ENCODE measurements at regions of chr20 and their contacts with region 1.

Region 1: GRCh38 chr20:32966881-32967781 is 37.1 kb downstream of the SUN5 start:
- DNase-seq: peak; percentile 26
- H3K4me3 ChIP-seq: no peak overlapping the region
- H3K27ac ChIP-seq: no peak overlapping the region
- H3K4me1 ChIP-seq: no peaks in the 10 kb centered on the region
- H3K27me3 ChIP-seq: no peaks in the 10 kb centered on the region
- CTCF ChIP-seq: no peak
- EP300 ChIP-seq: no peak
- POLR2A ChIP-seq: no peak

Region 2: GRCh38 chr20:33005132-33005566 is 38.0 kb after region 1 on chr20:
- intact Hi-C with region 1: no loop called
- DNase-seq: no peak
- H3K4me3 ChIP-seq: no peak overlapping the region
- H3K27ac ChIP-seq: no peak overlapping the region
- H3K4me1 ChIP-seq: no peaks in the 10 kb centered on the region
- H3K27me3 ChIP-seq: no peaks in the 10 kb centered on the region
- CTCF ChIP-seq: no peak
- EP300 ChIP-seq: no peak
- POLR2A ChIP-seq: no peak

Region 3: DNA sequence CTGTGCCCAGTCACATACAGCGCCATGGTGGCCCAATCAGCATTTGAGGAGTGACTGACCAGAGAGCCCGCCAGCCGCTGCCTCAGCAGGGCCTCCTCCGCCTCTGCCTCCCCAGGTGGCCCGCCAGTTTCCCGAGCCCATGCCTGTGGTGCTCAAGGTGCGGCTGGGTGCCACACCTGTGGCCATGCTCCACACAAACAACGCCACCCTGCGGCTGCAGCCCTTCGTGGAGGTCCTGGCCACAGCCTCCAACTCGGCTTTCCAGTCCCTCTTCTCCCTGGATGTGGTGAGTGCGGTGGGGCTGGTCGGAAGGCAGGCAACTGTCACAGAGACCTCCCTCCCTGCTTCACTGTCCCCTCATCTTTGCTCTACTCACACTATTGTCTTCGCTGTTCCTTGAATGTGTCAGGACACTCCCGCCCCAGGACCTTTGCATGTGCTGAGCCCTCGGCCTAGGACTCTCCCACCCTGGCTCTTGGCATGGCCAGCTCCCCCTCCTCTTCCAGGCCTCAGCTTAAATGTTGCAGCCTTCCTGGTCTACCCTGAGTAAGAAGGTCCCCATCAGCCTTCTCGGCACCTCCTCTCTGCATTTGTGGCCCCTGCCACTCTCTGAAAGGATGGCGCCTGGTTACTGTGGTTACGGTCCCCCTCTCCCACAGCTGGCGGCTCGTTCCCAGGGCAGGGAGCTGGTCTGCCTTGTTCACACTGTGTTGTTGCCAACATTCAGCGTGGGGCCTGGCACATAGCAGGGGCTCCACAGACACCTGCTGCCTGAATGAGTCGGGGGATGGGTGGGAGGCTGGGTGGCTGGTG is 52.5 kb after region 1 on chr20:
- intact Hi-C with region 1: loop called (anchors 10 kb)
- DNase-seq: no peak
- H3K4me3 ChIP-seq: no peak overlapping the region
- H3K27ac ChIP-seq: no peak overlapping the region
- H3K4me1 ChIP-seq: no peaks in the 10 kb centered on the region
- H3K27me3 ChIP-seq: peaks cover 0 to 6% (median 0%) of the 10 kb centered on the region in 3 donors
- CTCF ChIP-seq: no peak
- EP300 ChIP-seq: no peak
- POLR2A ChIP-seq: no peak

Measured in sigmoid colon (tissue), 7 donors.